Activated T-helper 1 cell treated with anti-CD3 and anti-CD28 coated beads, Interleukin-12 subunit alpha, Interleukin-12 subunit beta, Interleukin-2, Interleukin-4 antibody, amounts not matched to agents 30 ng/mL and 10 ng/mL and 1 ng/mL, durations not matched to agents 14 hours and 24 hours and 36 hours (primary cell): ENCODE measurements at regions of chr7 and their contacts with region 1.

Region 1: DNA sequence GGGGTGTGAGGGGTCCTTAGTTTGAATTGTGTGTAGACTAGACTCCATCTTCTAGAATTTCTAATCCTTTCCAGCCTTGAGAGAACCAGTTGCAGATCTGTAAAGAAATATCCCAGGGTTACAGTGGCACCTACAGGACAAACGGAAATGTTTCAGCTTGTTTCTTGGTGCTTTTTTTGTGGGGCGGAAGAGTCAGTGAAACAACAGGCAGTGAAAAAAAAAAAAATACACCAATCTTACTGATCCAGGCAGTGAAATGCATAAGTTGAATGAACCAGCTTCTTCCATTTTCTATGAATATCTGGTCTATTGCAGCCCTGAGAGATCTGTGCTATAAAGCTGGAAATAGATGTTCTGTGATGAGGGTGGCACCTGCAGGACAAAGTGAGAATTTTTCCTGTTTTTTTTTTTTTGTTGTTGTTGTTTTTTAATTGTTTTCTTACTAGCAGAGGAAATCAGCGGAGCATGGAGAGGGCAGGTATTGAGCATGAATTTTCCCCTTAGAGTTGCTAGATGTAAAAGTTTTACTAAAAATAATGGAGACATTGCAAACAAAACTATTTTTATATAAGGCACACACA is 81.9 kb upstream of the DYNC1I1 start:
- DNase-seq: no peak
- H3K4me3 Mint-ChIP-seq: no peak overlapping the region
- H3K27ac Mint-ChIP-seq: no peak overlapping the region
- H3K4me1 Mint-ChIP-seq: peaks cover 5% of the 10 kb centered on the region
- H3K27me3 Mint-ChIP-seq: peaks cover 2% of the 10 kb centered on the region

Region 2: DNA sequence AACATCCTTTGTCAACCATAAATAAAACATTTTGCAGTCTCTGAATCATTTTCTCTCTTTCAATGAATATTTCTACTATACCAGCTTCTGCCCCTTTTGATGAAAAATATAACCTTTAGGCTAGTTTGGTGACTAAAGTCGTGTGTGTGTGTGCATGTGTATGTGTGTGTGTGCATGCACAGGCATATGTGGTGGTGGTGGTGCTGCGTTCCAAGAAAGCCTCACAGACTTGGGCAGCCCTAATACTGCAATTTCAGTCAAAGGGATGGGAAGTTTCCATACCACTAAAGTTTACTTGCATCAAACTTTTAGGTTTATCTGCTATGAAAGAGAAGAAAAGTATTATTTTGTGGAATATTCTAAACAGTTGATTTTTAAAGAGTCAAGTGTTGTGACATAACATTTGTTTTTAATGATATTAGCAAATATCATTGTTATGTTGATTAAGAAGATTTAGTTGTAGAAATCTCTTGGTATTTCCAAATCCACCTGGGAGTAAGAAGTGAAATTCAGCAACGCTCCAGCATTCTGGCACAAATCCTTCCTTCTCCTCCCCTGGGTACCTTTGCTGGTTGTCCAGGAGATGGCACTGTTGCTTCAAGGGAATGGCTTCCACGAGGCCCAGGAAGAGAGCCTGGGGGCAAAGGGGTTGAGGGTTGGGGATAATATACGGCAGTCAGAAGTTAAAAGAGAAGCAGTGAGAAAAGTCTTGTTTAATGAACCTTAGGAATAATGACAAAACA is 163.3 kb before region 1 on chr7:
- intact Hi-C with region 1: loop called (anchors 1 kb)
- DNase-seq: no peak
- H3K4me3 Mint-ChIP-seq: no peak overlapping the region
- H3K27ac Mint-ChIP-seq: no peak overlapping the region
- H3K4me1 Mint-ChIP-seq: no peaks in the 10 kb centered on the region
- H3K27me3 Mint-ChIP-seq: peaks cover 8% of the 10 kb centered on the region

Region 3: DNA sequence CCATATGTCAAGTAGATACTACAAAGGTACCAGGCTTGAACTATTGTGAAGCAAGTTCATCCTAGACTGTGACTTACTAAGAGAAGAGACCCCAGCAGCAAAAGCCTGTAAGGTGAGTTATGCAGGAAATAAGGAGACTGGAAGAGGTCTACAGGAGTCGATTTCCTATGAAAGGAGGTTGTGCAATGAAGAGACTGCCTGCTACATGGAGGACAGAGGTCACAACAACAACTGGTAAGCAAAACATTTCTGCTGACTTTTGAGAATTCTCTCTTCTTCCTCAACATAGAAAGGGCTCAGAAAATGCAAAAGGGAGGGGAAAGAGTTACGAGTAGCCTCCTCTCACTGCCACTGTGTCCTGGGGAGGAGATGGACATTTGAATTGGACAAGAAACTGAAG is 136.5 kb before region 1 on chr7:
- intact Hi-C with region 1: no loop called
- DNase-seq: no peak
- H3K4me3 Mint-ChIP-seq: no peak overlapping the region
- H3K27ac Mint-ChIP-seq: no peak overlapping the region
- H3K4me1 Mint-ChIP-seq: no peaks in the 10 kb centered on the region
- H3K27me3 Mint-ChIP-seq: no peaks in the 10 kb centered on the region